K562 (cell line): ENCODE measurements at regions of chr14 and their contacts with region 1.

Region 1: GRCh38 chr14:60622917-60623257 is 26.4 kb downstream of the SIX1 start:
- DNase-seq: no peak
- ATAC-seq: no peak
- H3K4me3 ChIP-seq: no peak overlapping the region
- H3K27ac ChIP-seq: no peak overlapping the region
- H3K4me1 ChIP-seq: no peaks in the 10 kb centered on the region
- H3K27me3 ChIP-seq: no peaks in the 10 kb centered on the region; a peak in 1 of 5 replicates
- CTCF ChIP-seq: no peak
- EP300 ChIP-seq: no peak
- POLR2A ChIP-seq: no peak
- RAD21 ChIP-seq: no peak

Region 2: DNA sequence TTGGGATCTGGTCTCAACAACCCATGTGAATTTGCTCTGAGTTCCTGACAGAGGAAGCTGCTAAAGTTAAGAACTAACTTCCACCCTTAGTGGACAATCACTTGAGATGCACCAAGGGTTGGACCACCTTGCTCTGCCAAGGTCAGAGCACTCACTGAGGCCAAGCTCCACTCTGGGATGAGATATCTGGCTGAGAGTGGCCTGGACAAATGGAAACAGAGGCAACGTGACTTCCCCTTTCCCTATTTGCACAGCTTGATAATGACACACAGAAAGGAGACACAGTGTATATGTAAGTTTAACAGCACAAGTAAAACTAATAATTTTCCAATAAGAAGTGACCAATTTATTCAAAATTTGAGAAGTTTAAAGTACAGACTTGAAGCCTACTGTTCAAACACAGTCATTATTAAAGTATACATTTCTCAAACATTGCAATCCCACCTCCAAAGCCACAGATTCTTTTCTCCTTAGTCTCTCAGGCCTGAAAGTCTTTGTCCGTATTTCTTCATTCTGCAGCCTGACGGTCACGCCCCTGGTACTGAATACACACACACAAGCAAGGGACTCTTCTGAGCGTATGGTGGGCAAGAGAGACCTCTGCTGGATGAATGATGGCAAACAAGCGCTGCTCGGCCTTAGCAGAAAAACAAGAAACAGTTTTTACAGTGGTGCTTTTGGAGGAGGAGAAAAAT is 629.6 kb after region 1 on chr14:
- CTCF ChIA-PET with region 1: interaction called, 8 read pairs
- POLR2A ChIA-PET with region 1: no interaction called
- in situ Hi-C with region 1: loop called (anchors 5 kb)
- intact Hi-C with region 1: loop called (anchors 1 kb)
- DNase-seq: peak; percentile 59 to 72 (median 62)
- ATAC-seq: peak; percentile 98
- H3K4me3 ChIP-seq: no peak overlapping the region
- H3K27ac ChIP-seq: no peak overlapping the region
- H3K4me1 ChIP-seq: no peaks in the 10 kb centered on the region
- H3K27me3 ChIP-seq: peaks cover 0 to 9% of the 10 kb centered on the region in 2 experiments; a peak in 3 of 5 replicates
- CTCF ChIP-seq: peak; percentile 72 to 79 (median 73)
- EP300 ChIP-seq: no peak
- POLR2A ChIP-seq: no peak
- RAD21 ChIP-seq: peak; percentile 84 to 89

Region 3: DNA sequence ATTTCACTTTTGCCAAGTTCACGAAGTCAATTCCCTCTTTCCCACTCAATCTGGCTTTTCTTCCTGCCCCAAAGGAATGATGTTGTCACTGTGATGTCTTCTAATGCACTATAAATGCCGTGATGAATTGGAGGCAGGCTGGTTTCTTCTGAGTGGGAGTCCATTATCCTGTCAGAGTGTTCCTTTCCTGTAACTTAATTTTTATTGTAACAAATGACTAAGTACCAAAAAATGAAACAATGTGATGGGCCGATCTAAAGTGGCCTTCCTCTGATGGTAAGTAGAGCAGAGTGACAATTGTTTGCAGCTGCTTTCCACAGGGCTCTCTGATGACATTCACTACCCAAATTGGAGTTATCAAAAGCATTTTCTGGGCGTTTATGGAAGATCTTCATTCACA is 636.1 kb after region 1 on chr14:
- CTCF ChIA-PET with region 1: interaction called, 8 read pairs
- POLR2A ChIA-PET with region 1: no interaction called
- in situ Hi-C with region 1: loop called (anchors 5 kb)
- intact Hi-C with region 1: no loop called
- DNase-seq: no peak
- ATAC-seq: no peak
- H3K4me3 ChIP-seq: no peak overlapping the region
- H3K27ac ChIP-seq: no peak overlapping the region
- H3K4me1 ChIP-seq: no peaks in the 10 kb centered on the region
- H3K27me3 ChIP-seq: peaks cover 0 to 5% of the 10 kb centered on the region in 2 experiments; a peak in 1 of 5 replicates
- CTCF ChIP-seq: no peak
- EP300 ChIP-seq: no peak
- POLR2A ChIP-seq: no peak
- RAD21 ChIP-seq: no peak